Right cardiac atrium (tissue), 5 donors: ENCODE measurements at regions of chrX and their contacts with region 1.

Region 1: DNA sequence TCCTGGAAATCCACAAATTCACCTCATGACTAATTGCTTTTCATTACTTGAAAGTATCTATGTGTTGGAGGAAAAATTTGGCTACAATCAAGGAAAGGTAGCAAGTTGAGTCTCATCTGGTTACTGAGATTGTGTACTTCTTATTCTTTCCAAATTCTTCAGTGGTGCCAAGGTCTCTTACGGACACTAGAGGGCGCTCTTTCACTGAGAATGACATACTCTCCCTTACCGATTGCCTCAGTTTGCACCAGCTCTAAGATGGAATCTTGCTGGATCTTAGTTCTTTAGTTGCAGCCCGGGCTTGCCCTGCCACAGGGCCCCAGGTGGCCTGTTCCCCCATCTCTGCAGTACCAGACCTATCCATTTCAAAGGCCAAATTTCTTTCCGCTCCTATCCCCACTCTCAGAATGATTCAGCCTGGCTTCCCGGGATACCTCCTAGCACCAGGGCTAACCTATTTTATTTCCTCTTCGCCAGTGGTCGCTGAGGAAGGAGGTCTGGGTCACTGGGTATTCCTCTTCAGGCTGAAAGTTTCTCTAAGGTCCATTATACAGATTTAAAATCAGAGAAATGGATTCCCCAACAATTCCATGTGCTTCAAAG is 24.6 kb upstream of the GPR50 start:
- DNase-seq: no peak
- ATAC-seq: peak in 1 of 2 donors; percentile 51
- H3K4me3 ChIP-seq: no peak overlapping the region
- H3K27ac ChIP-seq: no peak overlapping the region
- H3K4me1 ChIP-seq: no peaks in the 10 kb centered on the region
- H3K27me3 ChIP-seq: no peaks in the 10 kb centered on the region

Region 2: GRCh38 chrX:150405576-150405975 is 746.2 kb before region 1 on chrX:
- intact Hi-C with region 1: no loop called
- DNase-seq: no peak
- ATAC-seq: no peak
- H3K4me3 ChIP-seq: no peak overlapping the region
- H3K27ac ChIP-seq: no peak overlapping the region
- H3K4me1 ChIP-seq: peaks cover 3% of the 10 kb centered on the region
- H3K27me3 ChIP-seq: no peaks in the 10 kb centered on the region

Region 3: DNA sequence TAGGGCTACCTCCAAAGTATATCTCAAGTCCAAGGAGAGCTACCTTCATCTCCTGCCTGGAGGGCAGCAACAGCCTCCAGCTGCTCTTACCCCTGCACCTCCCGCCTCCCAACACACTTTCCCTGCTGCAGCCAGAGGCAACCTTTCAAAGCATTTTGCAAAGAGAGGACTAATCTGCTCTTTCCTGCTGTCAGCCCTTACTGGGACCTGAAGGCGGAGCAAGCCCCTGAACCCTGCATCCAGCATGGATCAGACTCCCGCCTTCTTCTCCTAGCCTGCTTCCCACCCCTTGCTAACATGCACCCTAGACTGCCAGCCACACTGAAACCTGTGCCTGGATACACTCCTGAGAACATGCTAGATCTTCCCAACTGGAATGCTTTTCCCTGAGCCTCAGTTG is 207.6 kb after region 1 on chrX:
- intact Hi-C with region 1: no loop called
- DNase-seq: no peak
- ATAC-seq: no peak
- H3K4me3 ChIP-seq: no peak overlapping the region
- H3K27ac ChIP-seq: no peak overlapping the region
- H3K4me1 ChIP-seq: no peaks in the 10 kb centered on the region
- H3K27me3 ChIP-seq: no peaks in the 10 kb centered on the region

Region 4: DNA sequence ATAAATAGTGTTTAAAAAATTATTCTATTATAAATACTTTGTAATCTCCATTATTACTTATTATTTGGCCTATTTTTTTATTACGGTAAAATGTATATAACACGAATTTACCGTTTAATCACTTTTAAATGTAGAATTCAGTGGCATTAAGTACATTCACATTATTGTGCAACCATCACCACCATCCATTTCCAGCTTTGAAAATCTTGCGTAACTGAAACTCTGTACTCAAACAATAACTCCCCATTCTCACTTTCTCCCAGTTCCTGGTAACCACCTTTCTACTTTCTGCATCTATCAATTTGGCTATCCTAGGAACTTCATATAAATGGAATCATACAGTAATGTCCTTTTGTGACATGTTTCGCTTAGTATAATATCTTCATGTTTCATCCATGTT is 457.5 kb after region 1 on chrX:
- intact Hi-C with region 1: no loop called
- DNase-seq: no peak
- ATAC-seq: no peak
- H3K4me3 ChIP-seq: no peak overlapping the region
- H3K27ac ChIP-seq: no peak overlapping the region
- H3K4me1 ChIP-seq: no peaks in the 10 kb centered on the region
- H3K27me3 ChIP-seq: no peaks in the 10 kb centered on the region

Region 5: DNA sequence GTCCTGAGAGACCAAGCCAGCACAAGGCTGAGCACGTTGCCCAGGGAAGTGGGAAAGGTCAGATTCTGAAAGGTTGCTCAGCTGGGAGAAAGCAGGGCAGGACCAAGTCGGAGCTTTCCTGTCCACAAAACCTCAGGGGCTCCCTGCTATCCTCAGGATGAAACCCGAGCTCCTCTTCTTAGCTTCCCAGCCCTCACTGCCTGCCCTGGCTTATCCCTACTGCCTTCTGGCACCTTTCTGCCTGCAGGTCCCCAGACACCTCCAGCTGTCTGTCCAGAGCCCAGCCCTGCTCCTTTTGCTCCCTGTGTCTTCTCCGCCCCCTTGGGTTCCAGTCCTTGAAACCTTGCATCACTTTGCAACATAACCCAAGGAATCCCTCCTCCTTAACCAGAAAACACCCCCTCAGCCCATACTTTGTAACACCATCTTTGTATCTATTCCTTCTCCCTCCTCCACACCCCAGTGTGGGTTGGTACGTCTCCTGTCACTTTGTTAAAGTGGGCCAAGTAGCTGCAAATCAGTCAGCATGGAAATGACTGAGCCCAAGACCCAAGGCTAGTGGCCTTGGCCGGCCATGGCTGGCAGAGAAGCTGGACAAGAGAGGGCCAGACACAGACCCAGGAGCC is 523.5 kb after region 1 on chrX:
- intact Hi-C with region 1: loop called (anchors 2 to 10 kb)
- DNase-seq: no peak
- ATAC-seq: no peak
- H3K4me3 ChIP-seq: no peak overlapping the region
- H3K27ac ChIP-seq: no peak overlapping the region
- H3K4me1 ChIP-seq: no peaks in the 10 kb centered on the region
- H3K27me3 ChIP-seq: no peaks in the 10 kb centered on the region

Region 6: DNA sequence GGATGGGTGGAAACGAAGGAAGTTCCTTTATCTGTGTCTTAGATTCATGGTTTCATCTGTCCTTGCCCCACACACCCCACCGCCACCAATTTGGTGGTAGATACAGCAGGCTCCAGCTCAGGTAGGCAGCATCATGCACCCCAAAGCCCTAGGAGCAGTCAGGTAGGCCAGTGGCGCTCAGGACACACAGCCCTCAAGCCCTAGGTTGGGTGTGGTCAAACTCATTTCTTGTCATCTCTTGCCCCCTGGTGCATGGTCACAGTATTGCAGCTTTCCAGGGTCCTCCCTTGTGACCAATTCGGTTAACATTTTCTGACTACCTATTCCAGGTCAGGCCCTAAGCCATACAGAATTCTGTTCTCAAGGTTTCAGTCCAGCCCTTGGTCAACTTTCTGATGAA is 529.0 kb after region 1 on chrX:
- intact Hi-C with region 1: loop called (anchors 2 to 10 kb)
- DNase-seq: peak in 2 of 3 donors; percentile 50 to 54
- ATAC-seq: peak in 1 of 2 donors; percentile 51
- H3K4me3 ChIP-seq: no peak overlapping the region
- H3K27ac ChIP-seq: no peak overlapping the region
- H3K4me1 ChIP-seq: no peaks in the 10 kb centered on the region
- H3K27me3 ChIP-seq: no peaks in the 10 kb centered on the region